Esophagus muscularis mucosa (tissue), 4 donors: ENCODE measurements at regions of chr1 and their contacts with region 1.

Region 1: DNA sequence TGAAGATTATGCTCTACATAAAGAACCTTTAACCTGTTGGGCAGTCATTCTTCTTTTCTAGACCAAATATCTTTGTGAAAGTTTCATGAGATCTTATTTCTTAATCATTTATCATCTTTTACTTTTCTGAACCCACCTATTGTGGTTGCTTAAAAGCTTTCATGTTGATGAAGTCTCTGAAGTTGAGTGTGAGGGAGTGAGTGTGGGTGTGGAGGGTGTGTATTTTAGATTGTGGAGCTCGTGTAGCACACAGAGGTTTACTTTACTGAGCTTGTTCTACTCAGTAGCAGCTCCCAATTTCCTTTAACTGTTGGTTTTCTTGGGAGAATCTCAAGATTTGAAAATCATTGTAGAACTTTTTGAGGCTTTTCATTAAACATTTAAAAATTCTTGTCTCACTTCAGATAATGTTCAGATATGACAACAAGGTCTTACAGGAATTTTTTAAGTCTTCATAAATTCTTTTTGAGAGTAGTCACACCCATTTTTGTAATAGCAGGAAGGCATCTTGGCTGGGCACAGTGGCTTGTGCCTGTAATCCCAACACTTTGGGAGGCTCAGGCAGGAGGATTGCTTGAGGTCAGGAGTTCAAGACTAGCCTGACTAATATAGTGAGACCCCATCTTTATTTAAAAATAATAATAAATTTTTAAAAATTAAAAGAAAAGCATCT is 17.0 kb downstream of the SRRM1 start:
- DNase-seq: no peak
- H3K4me3 ChIP-seq: no peak overlapping the region
- H3K27ac ChIP-seq: no peak overlapping the region
- H3K4me1 ChIP-seq: no peaks in the 10 kb centered on the region
- H3K27me3 ChIP-seq: no peaks in the 10 kb centered on the region
- CTCF ChIP-seq: no peak
- EP300 ChIP-seq: no peak
- POLR2A ChIP-seq: no peak

Region 2: DNA sequence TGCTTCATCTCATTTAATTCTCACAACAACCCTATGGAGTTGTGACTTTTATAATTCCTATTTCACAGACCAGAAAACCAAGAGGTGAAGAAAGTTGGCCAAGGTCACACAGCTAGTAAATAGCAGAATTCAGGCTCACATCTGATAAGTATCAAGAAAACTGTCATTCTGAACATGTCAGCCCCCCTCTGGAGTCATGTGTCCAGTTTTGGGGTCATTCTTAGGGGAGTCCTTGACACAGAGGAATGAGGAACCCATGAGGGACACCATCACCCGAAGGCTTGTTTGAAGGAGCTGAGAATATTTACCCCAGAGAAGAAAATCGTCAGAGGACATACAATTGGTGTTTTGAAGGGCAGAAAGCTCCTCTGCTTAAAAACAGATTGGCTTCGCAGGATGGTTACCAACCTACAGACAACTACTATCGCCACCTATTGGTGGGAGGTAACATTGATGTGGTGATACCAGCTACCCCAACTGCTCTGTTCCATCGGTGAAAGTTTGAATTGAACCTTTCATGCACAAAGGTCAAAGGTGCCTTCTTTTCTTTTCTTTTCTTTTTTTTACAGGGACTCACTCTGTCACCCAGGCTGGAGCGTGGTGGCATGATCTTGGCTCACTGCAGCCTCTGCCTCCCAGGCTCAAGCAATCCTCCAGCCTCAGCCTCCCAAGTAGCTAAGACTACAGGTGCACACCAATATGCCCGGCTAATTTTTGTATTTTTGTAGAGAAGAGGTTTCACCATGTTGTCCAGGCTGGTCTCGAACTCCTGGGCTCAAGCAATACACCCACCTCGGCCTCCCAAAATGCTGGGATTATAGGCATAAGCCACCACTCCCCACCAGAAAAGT is 72.9 kb before region 1 on chr1:
- intact Hi-C with region 1: no loop called
- DNase-seq: no peak
- H3K4me3 ChIP-seq: no peak overlapping the region
- H3K27ac ChIP-seq: no peak overlapping the region
- H3K4me1 ChIP-seq: no peaks in the 10 kb centered on the region
- H3K27me3 ChIP-seq: peaks cover 0 to 33% (median 0%) of the 10 kb centered on the region in 4 donors
- CTCF ChIP-seq: peak; percentile 55 to 68 (median 60)
- EP300 ChIP-seq: no peak
- POLR2A ChIP-seq: no peak

Region 3: GRCh38 chr1:25223471-25223870 is 563.3 kb after region 1 on chr1:
- intact Hi-C with region 1: loop called (anchors 10 kb)
- DNase-seq: no peak
- H3K4me3 ChIP-seq: no peak overlapping the region
- H3K27ac ChIP-seq: no peak overlapping the region
- H3K4me1 ChIP-seq: no peaks in the 10 kb centered on the region
- H3K27me3 ChIP-seq: no peaks in the 10 kb centered on the region
- CTCF ChIP-seq: no peak
- EP300 ChIP-seq: no peak
- POLR2A ChIP-seq: no peak